Common myeloid progenitor, CD34-positive (primary cell): ENCODE measurements at regions of chr17 and their contacts with region 1.

Region 1: DNA sequence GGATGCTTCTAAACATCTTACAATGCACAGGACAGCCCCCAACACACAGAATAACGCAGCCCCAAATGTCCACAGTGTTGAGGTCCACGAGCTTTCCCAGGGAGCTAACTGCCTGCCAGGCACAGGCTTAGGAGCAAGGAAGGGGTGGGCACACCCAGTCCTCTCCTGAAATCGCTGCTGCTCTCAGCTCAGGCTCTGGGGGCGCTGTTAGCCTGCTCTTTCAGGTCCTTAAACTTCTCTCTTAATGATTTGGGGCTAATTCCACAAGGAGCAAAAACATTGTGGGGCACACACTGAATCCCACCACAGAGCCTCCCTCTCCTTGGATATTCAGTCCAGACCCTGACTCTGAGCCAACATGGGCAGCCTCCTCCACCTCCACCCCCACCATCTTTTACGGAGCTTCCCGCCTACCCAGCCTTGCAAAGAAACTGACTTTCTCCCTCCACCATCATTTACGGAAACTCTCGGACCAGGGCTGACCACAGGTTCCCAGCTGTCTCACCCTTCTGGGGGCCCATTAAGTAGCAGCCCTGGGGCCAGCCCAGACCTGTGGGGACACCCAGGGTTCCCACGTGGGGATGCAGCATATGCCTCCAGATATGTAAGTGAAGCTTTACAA is 1.1 kb downstream of the CD300H start:
- DNase-seq: peak; percentile 54 to 61 (median 57)
- H3K4me3 ChIP-seq: no peak overlapping the region
- H3K27ac ChIP-seq: no peak overlapping the region
- H3K4me1 ChIP-seq: peaks cover 0 to 36% (median 20%) of the 10 kb centered on the region in 4 experiments
- H3K27me3 ChIP-seq: peaks cover 0 to 8% (median 0%) of the 10 kb centered on the region in 5 experiments

Region 2: GRCh38 chr17:74552037-74552436 is 14.2 kb before region 1 on chr17:
- CTCF ChIA-PET with region 1: interaction called, 11 read pairs
- POLR2A ChIA-PET with region 1: no interaction called
- DNase-seq: no peak
- H3K4me3 ChIP-seq: no peak overlapping the region
- H3K27ac ChIP-seq: no peak overlapping the region
- H3K4me1 ChIP-seq: peaks cover 0 to 21% (median 11%) of the 10 kb centered on the region in 4 experiments
- H3K27me3 ChIP-seq: no peaks in the 10 kb centered on the region

Region 3: DNA sequence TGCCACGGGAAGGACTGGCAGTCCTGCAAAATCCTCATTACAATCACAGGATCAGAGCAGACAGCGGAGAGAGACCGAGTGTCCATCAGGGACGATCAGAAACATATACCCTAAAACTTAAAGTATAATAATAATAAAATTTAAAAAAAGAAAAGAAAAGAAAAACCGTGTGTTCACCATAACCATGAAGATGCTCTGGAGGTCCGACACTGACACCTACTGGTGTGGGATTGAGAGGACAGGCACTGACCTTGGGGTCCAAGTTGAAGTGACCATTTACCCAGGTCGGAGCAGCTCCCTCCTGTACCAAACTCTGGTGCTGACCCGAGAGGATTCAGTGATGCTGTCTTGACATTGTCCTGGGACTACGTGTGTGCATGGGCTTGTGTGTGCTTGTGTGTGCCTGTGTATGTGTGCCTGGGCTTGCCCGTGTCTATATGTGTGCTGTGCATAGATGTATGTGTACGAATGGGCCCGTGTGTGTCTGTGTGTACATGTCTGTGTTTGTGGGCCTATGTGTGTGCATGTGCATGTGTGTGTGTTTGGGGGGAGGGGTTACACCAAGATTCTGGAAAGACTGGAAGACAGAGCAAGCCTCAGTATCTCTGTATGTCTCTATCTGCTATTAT is 35.8 kb after region 1 on chr17:
- CTCF ChIA-PET with region 1: interaction called, 27 read pairs
- POLR2A ChIA-PET with region 1: interaction called, 3 read pairs
- DNase-seq: peak; percentile 48 to 68 (median 62)
- H3K4me3 ChIP-seq: no peak overlapping the region
- H3K27ac ChIP-seq: no peak overlapping the region
- H3K4me1 ChIP-seq: peaks cover 12 to 50% (median 27%) of the 10 kb centered on the region in 4 experiments
- H3K27me3 ChIP-seq: no peaks in the 10 kb centered on the region

Region 4: GRCh38 chr17:74647871-74648672 is 81.8 kb after region 1 on chr17:
- CTCF ChIA-PET with region 1: interaction called, 20 read pairs
- POLR2A ChIA-PET with region 1: no interaction called
- DNase-seq: no peak
- H3K4me3 ChIP-seq: no peak overlapping the region
- H3K27ac ChIP-seq: no peak overlapping the region
- H3K4me1 ChIP-seq: peaks cover 0 to 2% (median 0%) of the 10 kb centered on the region in 4 experiments
- H3K27me3 ChIP-seq: peaks cover 0 to 27% (median 12%) of the 10 kb centered on the region in 5 experiments